ENCODE measurements at regions of chr4 and their contacts with region 1.

Region 1: DNA sequence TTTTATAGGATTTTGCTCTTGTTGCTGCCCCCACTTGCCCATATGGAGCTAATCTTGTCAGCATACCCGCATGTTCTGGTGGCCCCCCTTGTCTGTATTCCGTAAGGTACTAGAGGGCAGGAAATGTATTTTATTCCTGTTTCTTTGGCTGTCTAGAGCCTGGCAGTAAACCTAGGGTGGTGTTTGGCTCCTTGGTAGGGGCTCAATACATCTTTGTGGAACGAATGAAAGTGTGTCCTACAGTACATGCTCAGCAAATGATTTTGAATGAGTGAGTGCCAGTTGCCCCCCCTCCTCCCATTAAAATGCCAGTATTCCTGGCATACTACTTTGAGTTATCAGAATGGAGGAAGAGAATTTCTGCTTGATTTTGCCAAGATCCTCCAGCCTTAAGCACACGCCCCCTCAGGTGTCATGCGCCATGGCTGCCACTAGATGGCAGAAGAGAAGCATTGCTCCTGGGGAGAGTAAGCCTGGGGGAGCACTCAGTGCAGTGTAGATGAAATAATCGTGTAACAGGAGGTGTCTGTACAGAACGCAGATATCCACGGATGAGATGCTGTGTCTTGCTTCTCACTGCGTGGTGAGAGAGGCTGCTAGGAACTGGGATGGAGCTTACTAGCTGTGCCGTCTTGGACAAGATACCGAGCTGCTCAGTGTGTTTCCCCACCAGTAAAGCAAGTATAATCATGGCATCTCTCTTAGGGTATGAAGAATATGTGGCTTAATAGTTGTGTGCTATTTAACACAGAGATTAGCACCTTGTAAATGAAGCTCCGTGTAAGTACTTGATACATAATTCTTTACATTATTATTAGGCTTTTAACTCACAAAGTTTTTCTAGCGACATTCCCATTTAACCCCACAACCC is 17.2 kb upstream of the RNF212 start:
- DNase-seq: peak; percentile 54 to 87
- H3K4me3 ChIP-seq: no peak overlapping the region
- CTCF ChIP-seq: peak in 1 of 3 donors; percentile 95
- POLR2A ChIP-seq: no peak

Region 2: GRCh38 chr4:1337376-1337860 is 206.9 kb after region 1 on chr4:
- intact Hi-C with region 1: loop called (anchors 10 kb)
- DNase-seq: no peak
- H3K4me3 ChIP-seq: no peak overlapping the region
- CTCF ChIP-seq: no peak
- POLR2A ChIP-seq: no peak